ENCODE measurements at regions of chr15 and their contacts with region 1.

Region 1: DNA sequence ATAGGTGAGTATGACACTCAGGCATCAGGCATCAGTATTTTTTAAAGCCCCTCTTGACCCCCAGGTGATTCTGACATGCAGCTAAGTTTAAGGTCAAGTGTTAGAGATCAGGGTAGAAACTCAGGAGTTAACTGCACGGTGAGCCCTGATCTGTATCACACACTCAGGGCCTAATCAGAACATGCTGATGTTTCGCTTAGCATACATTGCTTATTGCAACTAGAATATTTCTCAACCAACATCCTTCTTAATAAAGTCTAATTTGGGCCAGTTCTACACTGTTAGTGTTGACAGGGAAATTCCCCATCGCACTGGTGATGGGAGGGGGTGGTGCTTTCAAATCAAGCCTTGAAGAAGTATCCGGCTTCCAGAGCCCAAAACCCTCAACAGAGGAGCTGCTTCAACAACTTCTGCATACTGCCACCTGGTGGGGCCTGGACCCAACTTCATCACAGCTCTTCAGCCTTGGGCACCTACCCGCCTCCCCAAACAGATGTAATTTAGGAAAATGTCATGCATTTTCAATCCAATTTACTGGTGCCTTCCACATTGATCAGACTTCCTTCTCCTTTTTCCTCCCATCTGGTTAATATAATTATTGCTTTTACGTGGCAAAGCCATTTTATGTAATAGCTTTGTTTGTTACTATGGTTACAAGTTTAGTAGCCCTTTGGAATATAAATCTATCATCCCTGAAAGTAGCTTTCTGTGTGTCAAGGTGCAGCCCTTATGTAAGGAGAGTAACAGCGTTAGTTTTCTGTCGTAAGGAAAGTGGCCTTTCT is 312.2 kb downstream of the RORA start:
- DNase-seq: peak; percentile 88
- ATAC-seq: peak; percentile 97
- H3K4me3 Mint-ChIP-seq: no peak overlapping the region
- H3K27ac Mint-ChIP-seq: no peak overlapping the region
- H3K4me1 Mint-ChIP-seq: peaks cover 8% of the 10 kb centered on the region
- H3K27me3 Mint-ChIP-seq: no peaks in the 10 kb centered on the region

Region 2: DNA sequence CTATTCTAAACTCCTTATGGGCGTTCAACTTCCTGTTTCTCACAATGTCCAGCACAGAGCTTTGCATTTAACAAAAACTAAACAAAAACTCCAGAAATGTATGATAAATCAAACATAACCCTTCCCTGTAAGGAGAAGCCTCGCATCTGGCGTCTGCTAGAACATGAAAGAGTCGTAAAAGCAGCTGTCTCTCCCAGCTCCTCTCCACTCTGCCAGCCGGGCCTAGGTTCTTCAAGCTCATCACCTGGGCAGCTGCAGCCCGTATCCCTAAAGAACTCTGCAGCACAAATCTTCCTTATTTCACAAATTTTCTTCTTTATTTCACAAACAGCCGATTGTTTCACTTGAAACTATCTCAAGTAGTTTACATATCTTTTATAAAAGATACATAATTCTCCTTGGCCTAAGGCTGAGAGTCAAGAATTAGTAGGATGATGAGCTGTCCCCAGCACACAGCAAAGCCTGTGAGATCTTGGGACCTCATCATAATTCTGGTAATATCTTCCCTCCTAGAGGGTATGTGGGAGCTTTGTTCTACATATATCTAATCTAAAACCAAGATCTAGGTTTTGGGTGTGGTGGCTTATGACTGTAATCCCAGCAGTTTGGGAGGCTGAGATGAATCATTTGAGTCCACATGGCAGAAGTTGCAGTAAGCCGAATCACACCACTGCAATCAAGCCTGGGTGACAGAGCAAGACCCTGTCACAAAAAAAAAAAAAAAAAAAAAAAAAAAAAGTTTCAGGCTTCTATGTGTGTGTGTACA is 554.4 kb before region 1 on chr15:
- CTCF ChIA-PET with region 1: interaction called, 15 read pairs
- POLR2A ChIA-PET with region 1: no interaction called
- DNase-seq: peak; percentile 41
- ATAC-seq: peak; percentile 80
- H3K4me3 Mint-ChIP-seq: no peak overlapping the region
- H3K27ac Mint-ChIP-seq: peak overlapping the region; percentile 35
- H3K4me1 Mint-ChIP-seq: peaks cover 26% of the 10 kb centered on the region
- H3K27me3 Mint-ChIP-seq: no peaks in the 10 kb centered on the region

Region 3: DNA sequence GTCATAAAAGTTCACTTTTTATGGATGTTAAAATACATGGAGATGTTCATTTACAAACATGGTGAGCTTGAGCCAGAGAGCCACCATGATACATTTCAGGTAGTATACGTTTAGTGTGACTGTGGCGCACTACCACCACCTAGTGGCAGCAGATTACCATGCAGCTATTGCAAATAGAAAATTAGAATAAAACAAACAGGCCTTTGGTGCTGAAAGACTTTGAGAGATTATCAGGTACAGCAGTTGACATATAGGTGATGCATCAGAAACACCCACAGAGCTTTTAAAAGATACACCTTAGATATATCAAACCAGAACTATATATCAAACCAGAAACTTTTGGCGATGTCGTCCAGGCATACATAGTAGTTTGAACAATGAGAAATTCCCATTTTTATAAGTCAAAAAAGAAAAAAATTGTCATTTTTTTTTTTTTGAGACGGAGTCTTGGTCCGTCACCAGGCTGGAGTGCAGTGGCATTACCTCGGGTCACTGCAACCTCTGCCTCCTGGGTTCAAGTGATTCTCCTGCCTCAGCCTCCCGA is 396.0 kb before region 1 on chr15:
- CTCF ChIA-PET with region 1: interaction called, 26 read pairs
- POLR2A ChIA-PET with region 1: no interaction called
- DNase-seq: peak; percentile 88
- ATAC-seq: peak; percentile 75
- H3K4me3 Mint-ChIP-seq: no peak overlapping the region
- H3K27ac Mint-ChIP-seq: peak overlapping the region; percentile 44
- H3K4me1 Mint-ChIP-seq: peaks cover 30% of the 10 kb centered on the region
- H3K27me3 Mint-ChIP-seq: no peaks in the 10 kb centered on the region

Region 4: GRCh38 chr15:60592371-60593169 is 324.3 kb before region 1 on chr15:
- CTCF ChIA-PET with region 1: interaction called, 135 read pairs
- POLR2A ChIA-PET with region 1: interaction called, 5 read pairs
- DNase-seq: peak; percentile 90
- ATAC-seq: peak; percentile 89
- H3K4me3 Mint-ChIP-seq: peak overlapping the region; percentile 82
- H3K27ac Mint-ChIP-seq: peak overlapping the region; percentile 83
- H3K4me1 Mint-ChIP-seq: peaks cover 58% of the 10 kb centered on the region
- H3K27me3 Mint-ChIP-seq: no peaks in the 10 kb centered on the region

Region 5: GRCh38 chr15:60798821-60799220 is 118.0 kb before region 1 on chr15:
- CTCF ChIA-PET with region 1: interaction called, 10 read pairs
- POLR2A ChIA-PET with region 1: no interaction called
- DNase-seq: no peak
- ATAC-seq: no peak
- H3K4me3 Mint-ChIP-seq: no peak overlapping the region
- H3K27ac Mint-ChIP-seq: peak overlapping the region; percentile 32
- H3K4me1 Mint-ChIP-seq: peaks cover 41% of the 10 kb centered on the region
- H3K27me3 Mint-ChIP-seq: no peaks in the 10 kb centered on the region

Region 6: GRCh38 chr15:60905587-60905986 is 11.3 kb before region 1 on chr15:
- CTCF ChIA-PET with region 1: interaction called, 27 read pairs
- POLR2A ChIA-PET with region 1: no interaction called
- DNase-seq: peak; percentile 44
- ATAC-seq: peak; percentile 67
- H3K4me3 Mint-ChIP-seq: no peak overlapping the region
- H3K27ac Mint-ChIP-seq: no peak overlapping the region
- H3K4me1 Mint-ChIP-seq: peaks cover 33% of the 10 kb centered on the region
- H3K27me3 Mint-ChIP-seq: peaks cover 6% of the 10 kb centered on the region

Region 7: GRCh38 chr15:60945196-60945595 is 28.3 kb after region 1 on chr15:
- CTCF ChIA-PET with region 1: no interaction called
- POLR2A ChIA-PET with region 1: no interaction called
- DNase-seq: no peak
- ATAC-seq: no peak
- H3K4me3 Mint-ChIP-seq: no peak overlapping the region
- H3K27ac Mint-ChIP-seq: no peak overlapping the region
- H3K4me1 Mint-ChIP-seq: no peaks in the 10 kb centered on the region
- H3K27me3 Mint-ChIP-seq: peaks cover 22% of the 10 kb centered on the region